Ascending aorta (tissue), 2 donors: ENCODE measurements at regions of chr1 and their contacts with region 1.

Region 1: DNA sequence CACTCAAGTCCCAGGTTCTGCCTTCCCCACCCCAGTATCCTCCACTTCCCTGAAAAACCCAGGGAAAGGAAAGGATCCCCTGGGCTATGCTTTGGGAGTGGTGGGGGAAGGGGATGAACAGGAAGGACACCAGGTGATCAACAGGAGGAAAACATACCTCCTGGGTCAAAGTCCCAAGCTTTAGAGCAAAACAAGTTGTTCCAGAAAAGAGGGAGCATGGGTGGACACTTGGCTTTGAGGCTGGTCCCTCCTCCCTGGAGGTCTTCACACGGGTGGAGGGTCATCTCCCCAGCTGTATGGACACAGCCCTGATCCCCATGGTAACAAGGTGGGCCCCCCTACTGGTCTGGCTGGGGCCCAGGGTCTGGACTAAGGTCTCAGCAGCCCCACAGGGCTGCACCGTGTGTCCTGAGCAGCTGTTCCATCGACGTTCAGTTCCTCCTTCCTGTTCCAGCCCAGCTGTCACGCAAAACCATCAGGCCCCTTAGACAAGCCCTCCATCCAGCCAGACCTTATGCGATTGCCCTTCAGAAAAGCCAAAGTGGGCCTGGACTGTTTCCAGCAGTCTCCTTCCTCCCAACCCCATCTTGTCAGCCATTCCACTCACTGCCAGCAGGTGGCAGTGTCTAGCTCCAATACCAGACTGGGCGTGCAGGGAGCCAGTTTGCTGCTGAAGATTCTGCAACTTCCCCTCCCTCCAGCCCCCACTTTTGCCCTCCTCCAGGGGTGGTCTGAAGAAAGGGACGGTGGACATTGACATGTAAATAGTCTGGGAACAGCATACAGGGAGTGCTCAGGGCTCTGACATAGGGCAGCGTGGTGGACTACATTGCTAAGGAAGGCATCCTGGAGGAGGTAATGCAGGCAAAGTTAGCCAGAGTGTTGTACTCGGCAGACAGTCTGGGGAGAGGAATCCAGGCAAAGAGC is 2.9 kb upstream of the PDZK1IP1 start:
- DNase-seq: peak in 1 of 2 donors; percentile 83
- H3K4me3 ChIP-seq: no peak overlapping the region
- H3K27ac ChIP-seq: no peak overlapping the region
- H3K4me1 ChIP-seq: peaks cover 7 to 28% of the 10 kb centered on the region in 2 donors
- H3K27me3 ChIP-seq: no peaks in the 10 kb centered on the region
- CTCF ChIP-seq: peak; percentile 84 to 96 (median 90)

Region 2: DNA sequence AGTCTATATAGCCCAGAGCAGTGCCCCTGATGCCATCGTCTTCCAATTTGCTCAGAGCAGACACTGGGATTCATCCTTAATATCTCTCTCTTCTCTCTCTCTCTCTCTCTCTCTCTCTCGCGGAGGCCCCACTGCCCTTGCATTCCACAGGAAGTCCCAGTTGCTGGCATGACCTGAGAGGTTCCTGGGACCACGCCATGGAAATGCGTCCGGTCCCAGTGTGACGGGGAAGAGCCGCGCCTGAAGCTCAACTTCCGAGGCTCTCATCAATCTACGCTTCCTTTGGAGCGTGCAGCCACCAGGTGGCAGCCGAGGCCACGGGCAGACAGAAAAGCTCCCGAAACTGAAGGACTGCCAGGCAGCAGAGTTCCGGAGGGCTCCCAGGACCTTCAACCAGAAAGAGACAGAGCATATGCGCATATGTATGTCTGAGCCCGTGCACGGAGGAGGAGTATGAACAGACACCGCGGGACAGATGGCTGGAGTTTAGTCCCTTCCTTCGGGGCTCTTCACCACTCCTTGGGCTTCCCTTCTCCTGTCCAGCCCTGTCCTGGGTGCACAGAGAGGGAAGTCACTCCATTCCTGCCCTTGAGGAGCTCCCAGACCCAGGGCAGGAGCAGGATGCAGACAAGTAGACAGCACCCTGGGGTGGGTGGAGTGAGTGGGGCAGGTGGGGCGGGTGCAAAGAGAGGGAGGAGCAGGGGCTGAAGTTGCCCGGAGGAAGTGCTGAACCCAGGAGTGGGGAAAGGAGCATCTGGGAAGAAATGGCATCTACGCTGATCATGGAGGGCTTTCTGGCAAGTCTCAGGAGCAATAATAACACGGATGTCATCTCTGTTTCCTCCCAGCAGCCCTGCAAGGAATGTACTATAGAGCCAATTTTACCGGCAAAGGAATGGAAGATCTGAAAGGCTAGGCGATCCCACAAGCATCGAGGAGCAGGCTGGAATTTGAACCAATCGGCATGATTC is 13.4 kb before region 1 on chr1:
- intact Hi-C with region 1: loop called (anchors 1 kb)
- DNase-seq: peak; percentile 36 to 96
- H3K4me3 ChIP-seq: peak overlapping the region; percentile 42 to 62
- H3K27ac ChIP-seq: peak overlapping the region in 1 of 2 donors; percentile 12
- H3K4me1 ChIP-seq: peaks cover 0 to 12% of the 10 kb centered on the region in 2 donors
- H3K27me3 ChIP-seq: no peaks in the 10 kb centered on the region
- CTCF ChIP-seq: peak; percentile 85 to 94 (median 89)

Region 3: GRCh38 chr1:47213230-47213963 is 20.7 kb after region 1 on chr1:
- intact Hi-C with region 1: no loop called
- DNase-seq: peak in 1 of 2 donors; percentile 43
- H3K4me3 ChIP-seq: no peak overlapping the region
- H3K27ac ChIP-seq: no peak overlapping the region
- H3K4me1 ChIP-seq: no peaks in the 10 kb centered on the region
- H3K27me3 ChIP-seq: no peaks in the 10 kb centered on the region
- CTCF ChIP-seq: no peak

Region 4: DNA sequence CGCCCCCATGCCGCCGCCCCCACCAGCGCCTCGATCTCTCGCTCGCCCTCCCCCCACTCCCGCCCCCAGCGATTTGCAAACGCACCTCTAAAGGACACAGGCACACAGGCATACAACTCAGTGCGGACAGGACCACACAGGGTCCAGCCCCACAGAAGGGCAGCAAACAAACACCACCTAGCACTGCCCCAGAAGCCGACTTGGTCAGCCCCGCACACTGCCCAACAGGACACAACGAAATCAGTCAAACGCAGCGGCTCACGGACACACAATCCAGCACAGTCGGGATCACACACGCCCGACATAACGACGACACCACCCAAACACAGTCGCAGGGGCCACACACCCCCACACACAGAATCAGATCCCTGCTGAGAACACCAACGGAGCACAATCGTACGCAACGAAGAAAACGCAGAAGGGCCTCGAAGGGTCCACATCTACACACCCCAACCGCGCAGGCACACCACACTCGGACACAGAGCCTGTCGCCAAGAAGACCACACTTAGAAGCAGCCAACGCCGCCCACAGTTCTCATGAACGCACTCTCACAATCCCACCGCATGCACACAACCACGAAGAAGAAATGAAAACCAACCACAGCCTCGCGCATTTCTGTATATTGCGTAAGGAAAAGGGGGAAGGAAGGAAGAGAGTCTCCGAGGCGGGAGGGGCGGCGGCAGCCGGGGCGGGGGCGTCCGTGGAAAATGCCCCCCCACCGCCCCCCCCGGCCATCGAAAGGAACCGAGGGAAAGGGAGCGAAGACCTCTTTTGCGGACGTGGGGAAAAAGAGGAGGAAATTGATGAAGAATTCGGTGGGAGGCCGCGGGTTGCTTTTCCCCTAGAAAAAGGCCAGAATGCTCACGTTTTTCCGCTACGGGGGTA is 38.8 kb after region 1 on chr1:
- intact Hi-C with region 1: no loop called
- DNase-seq: no peak
- H3K4me3 ChIP-seq: peak overlapping the region; percentile 48 to 54
- H3K27ac ChIP-seq: peak overlapping the region in 1 of 2 donors; percentile 2
- H3K4me1 ChIP-seq: peaks cover 13 to 14% of the 10 kb centered on the region in 2 donors
- H3K27me3 ChIP-seq: peaks cover 35% of the 10 kb centered on the region
- CTCF ChIP-seq: no peak

Region 5: GRCh38 chr1:47333922-47334764 is 141.4 kb after region 1 on chr1:
- intact Hi-C with region 1: loop called (anchors 5 kb)
- DNase-seq: peak; percentile 31 to 90
- H3K4me3 ChIP-seq: peak overlapping the region; percentile 93 to 100
- H3K27ac ChIP-seq: peak overlapping the region; percentile 99 to 100
- H3K4me1 ChIP-seq: peaks cover 14 to 22% of the 10 kb centered on the region in 2 donors
- H3K27me3 ChIP-seq: no peaks in the 10 kb centered on the region
- CTCF ChIP-seq: peak in 1 of 3 experiments; percentile 28

Region 6: DNA sequence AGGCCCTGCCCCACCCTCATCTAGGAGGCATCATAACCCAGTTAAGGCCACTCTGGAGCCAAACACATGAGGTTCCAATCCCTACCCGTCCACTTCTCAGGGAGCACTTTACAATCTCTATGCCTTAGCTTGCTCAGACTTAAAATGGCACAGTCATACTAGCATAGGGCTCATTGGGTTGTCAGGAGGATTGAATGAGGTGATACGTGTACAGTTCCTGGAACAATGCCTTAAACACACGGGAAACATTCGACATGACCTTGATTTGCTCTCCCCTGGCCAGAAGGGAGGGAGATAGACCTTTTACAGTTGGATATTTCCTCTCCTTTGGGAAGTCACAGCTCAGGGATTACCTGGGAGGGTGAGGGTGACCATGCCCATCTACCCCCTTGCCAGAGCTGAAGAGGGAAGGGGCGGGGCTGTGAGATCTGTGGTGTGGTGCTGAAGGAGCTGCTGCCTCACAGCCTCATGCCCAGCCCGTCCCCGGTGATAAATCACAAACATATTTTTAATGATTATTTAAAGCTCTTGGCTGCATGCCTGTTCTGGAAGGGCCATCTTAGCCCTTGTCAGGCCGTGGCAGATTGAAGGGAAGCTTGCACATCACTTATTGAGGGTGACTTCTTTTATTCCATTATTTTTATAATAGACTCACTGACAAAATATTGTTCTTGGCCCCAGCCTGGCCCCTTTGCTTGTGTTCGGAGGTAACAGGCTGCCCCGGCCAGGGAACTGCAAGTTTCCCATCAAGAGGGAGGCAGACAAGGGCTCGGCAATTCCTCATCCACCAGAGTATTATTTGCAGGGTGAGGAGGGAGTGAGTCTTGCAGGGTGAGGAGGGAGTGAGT is 328.5 kb after region 1 on chr1:
- intact Hi-C with region 1: loop called (anchors 1 kb)
- DNase-seq: peak; percentile 67 to 92
- H3K4me3 ChIP-seq: no peak overlapping the region
- H3K27ac ChIP-seq: peak overlapping the region; percentile 83 to 90
- H3K4me1 ChIP-seq: peaks cover 4 to 26% of the 10 kb centered on the region in 2 donors
- H3K27me3 ChIP-seq: no peaks in the 10 kb centered on the region
- CTCF ChIP-seq: no peak